ENCODE measurements at regions of chr18 and their contacts with region 1.

Region 1: GRCh38 chr18:22279741-22280452 is 110.5 kb downstream of the GATA6 start:
- DNase-seq: no peak
- ATAC-seq: peak in 2 of 8 donors; percentile 39 to 57
- H3K4me3 ChIP-seq: no peak overlapping the region
- H3K27ac ChIP-seq: peak overlapping the region in 9 of 10 donors; percentile 42 to 92 (median 85)
- H3K4me1 ChIP-seq: peaks cover 0 to 55% (median 16%) of the 10 kb centered on the region in 9 donors
- H3K27me3 ChIP-seq: no peaks in the 10 kb centered on the region
- CTCF ChIP-seq: no peak

Region 2: GRCh38 chr18:22324191-22325131 is 44.6 kb after region 1 on chr18:
- intact Hi-C with region 1: loop called in 2 of 10 experiments (anchors 1 to 5 kb)
- DNase-seq: peak; percentile 74 to 78
- ATAC-seq: peak; percentile 78 to 93 (median 86)
- H3K4me3 ChIP-seq: peak overlapping the region in 9 of 10 donors; percentile 4 to 45 (median 33)
- H3K27ac ChIP-seq: peak overlapping the region; percentile 30 to 82 (median 68)
- H3K4me1 ChIP-seq: peaks cover 6 to 37% (median 19%) of the 10 kb centered on the region in 9 donors
- H3K27me3 ChIP-seq: no peaks in the 10 kb centered on the region
- CTCF ChIP-seq: peak; percentile 10 to 58 (median 37)

Region 3: DNA sequence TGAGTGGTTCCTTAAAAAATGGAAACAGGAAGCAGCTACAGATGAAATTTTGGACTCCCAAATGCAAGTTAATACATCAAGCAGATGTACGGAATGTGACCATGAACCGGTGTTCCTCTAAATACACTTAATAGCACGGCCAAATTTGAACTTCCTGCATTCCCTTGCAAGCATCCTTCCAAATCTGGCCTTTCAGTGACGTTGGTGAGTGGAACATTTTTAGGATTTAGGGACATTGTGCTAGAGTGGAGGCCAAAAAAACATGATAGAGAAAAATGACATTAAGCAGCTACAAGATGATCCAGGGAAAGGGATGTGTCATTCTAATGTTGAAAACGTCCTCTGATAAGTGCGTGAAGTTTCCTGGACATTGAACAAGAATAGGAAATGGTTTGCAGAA is 75.7 kb after region 1 on chr18:
- intact Hi-C with region 1: no loop called
- DNase-seq: peak in 1 of 2 donors; percentile 49
- ATAC-seq: peak; percentile 70 to 91 (median 90)
- H3K4me3 ChIP-seq: no peak overlapping the region
- H3K27ac ChIP-seq: peak overlapping the region in 8 of 10 donors; percentile 35 to 74 (median 60)
- H3K4me1 ChIP-seq: peaks cover 0 to 20% (median 15%) of the 10 kb centered on the region in 9 donors
- H3K27me3 ChIP-seq: no peaks in the 10 kb centered on the region
- CTCF ChIP-seq: no peak

Region 4: GRCh38 chr18:22465859-22466457 is 186.1 kb after region 1 on chr18:
- intact Hi-C with region 1: loop called in 3 of 10 experiments (anchors 5 to 10 kb)
- DNase-seq: peak in 1 of 2 donors; percentile 74
- ATAC-seq: peak; percentile 85 to 95 (median 90)
- H3K4me3 ChIP-seq: no peak overlapping the region
- H3K27ac ChIP-seq: peak overlapping the region; percentile 56 to 90 (median 85)
- H3K4me1 ChIP-seq: peaks cover 15 to 48% (median 42%) of the 10 kb centered on the region in 9 donors
- H3K27me3 ChIP-seq: no peaks in the 10 kb centered on the region
- CTCF ChIP-seq: no peak

Region 5: DNA sequence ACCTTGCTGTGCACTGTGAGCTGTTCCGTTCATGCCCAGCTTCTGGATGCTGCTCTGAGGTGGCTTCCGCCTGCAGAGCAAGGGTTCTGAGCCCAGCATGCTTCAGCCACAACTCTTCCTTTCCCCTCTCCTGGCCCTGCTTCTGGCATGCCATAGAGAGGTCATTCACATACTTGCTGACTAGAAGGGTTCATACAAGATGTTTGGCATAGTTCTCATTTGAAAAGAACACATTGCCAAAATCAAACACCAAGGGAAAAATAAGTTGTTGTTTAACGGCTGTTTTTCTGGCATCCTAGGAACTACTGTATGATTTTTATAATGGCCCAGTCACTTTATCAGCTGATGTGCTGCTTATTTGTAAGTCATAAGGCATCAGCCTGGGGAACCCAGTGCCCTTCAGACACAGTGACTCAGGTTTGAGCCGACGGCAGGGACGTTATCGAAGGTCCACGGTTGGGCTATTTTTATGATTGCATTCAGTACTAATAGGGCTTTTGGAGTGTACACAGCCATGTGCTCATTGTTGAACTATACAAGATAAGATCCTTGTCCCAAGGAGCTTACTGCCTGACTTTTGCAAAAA is 191.7 kb after region 1 on chr18:
- intact Hi-C with region 1: loop called in 3 of 10 experiments (anchors 5 to 10 kb)
- DNase-seq: peak; percentile 51 to 82
- ATAC-seq: peak; percentile 83 to 95 (median 90)
- H3K4me3 ChIP-seq: no peak overlapping the region
- H3K27ac ChIP-seq: peak overlapping the region; percentile 77 to 92 (median 84)
- H3K4me1 ChIP-seq: peaks cover 21 to 56% (median 51%) of the 10 kb centered on the region in 9 donors
- H3K27me3 ChIP-seq: no peaks in the 10 kb centered on the region
- CTCF ChIP-seq: no peak